Activated CD4-positive, alpha-beta T cell treated with anti-CD3 and anti-CD28 coated beads, Interleukin-2, amount 10 ng/mL, durations not matched to agents 24 days and 14 days (primary cell): ENCODE measurements at regions of chr13 and their contacts with region 1.

Region 1: GRCh38 chr13:28494776-28495537 is at the start of gene FLT1:
- DNase-seq: peak; percentile 84
- H3K4me3 Mint-ChIP-seq: peak within 1 kb of the TSS; percentile 85
- H3K27ac Mint-ChIP-seq: peak within 1 kb of the TSS; percentile 72
- H3K4me1 Mint-ChIP-seq: peaks cover 21% of the 10 kb centered on the region
- H3K27me3 Mint-ChIP-seq: peaks cover 36% of the 10 kb centered on the region
- total RNA-seq, gene FLT1: 46.3 and 46.7 TPM in 2 replicates

Region 2: DNA sequence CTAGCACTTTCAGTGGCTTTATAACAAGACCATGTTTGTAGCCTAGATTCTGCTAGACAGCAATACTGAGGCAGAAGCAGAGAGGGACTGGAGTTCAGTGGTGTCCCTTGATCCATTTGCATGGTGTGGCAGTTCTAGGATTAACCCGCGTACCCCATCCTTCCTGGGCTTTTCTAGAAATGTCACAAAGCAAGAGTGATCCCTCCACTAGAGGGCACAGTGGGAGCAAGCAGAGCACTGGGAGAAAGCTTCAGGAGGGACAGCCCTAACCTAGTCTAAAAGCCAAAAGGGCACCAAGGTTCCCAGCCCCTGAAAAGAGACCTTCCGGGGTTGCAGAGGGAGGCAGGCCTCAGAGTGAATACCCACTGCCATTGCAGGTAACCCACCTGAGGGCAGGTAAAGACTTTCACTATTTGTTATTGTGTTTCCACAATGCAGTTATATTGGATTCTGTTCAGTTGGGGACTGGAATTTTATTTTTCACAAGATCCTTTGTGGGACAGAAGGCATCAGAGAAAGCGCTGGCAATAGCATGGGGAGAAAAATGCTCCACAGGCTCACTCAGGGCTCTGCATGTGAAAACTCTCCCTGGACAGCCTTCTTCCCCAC is 170.7 kb before region 1 on chr13:
- intact Hi-C with region 1: loop called (anchors 5 kb)
- DNase-seq: peak; percentile 89
- H3K4me3 Mint-ChIP-seq: no peak overlapping the region
- H3K27ac Mint-ChIP-seq: no peak overlapping the region
- H3K4me1 Mint-ChIP-seq: peaks cover 4% of the 10 kb centered on the region
- H3K27me3 Mint-ChIP-seq: no peaks in the 10 kb centered on the region

Region 3: GRCh38 chr13:28376604-28377003 is 118.4 kb before region 1 on chr13:
- intact Hi-C with region 1: no loop called
- DNase-seq: no peak
- H3K4me3 Mint-ChIP-seq: no peak overlapping the region
- H3K27ac Mint-ChIP-seq: no peak overlapping the region
- H3K4me1 Mint-ChIP-seq: no peaks in the 10 kb centered on the region
- H3K27me3 Mint-ChIP-seq: no peaks in the 10 kb centered on the region

Region 4: GRCh38 chr13:28475916-28476725 is 18.8 kb before region 1 on chr13:
- intact Hi-C with region 1: loop called (anchors 2 kb)
- DNase-seq: no peak
- H3K4me3 Mint-ChIP-seq: no peak overlapping the region
- H3K27ac Mint-ChIP-seq: no peak overlapping the region
- H3K4me1 Mint-ChIP-seq: peaks cover 15% of the 10 kb centered on the region
- H3K27me3 Mint-ChIP-seq: no peaks in the 10 kb centered on the region

Region 5: GRCh38 chr13:28628241-28628640 is 133.3 kb after region 1 on chr13:
- intact Hi-C with region 1: no loop called
- DNase-seq: no peak
- H3K4me3 Mint-ChIP-seq: no peak overlapping the region
- H3K27ac Mint-ChIP-seq: no peak overlapping the region
- H3K4me1 Mint-ChIP-seq: peaks cover 12% of the 10 kb centered on the region
- H3K27me3 Mint-ChIP-seq: peaks cover 15% of the 10 kb centered on the region